A549 (cell line): ENCODE measurements at regions of chr16 and their contacts with region 1.

Region 1: DNA sequence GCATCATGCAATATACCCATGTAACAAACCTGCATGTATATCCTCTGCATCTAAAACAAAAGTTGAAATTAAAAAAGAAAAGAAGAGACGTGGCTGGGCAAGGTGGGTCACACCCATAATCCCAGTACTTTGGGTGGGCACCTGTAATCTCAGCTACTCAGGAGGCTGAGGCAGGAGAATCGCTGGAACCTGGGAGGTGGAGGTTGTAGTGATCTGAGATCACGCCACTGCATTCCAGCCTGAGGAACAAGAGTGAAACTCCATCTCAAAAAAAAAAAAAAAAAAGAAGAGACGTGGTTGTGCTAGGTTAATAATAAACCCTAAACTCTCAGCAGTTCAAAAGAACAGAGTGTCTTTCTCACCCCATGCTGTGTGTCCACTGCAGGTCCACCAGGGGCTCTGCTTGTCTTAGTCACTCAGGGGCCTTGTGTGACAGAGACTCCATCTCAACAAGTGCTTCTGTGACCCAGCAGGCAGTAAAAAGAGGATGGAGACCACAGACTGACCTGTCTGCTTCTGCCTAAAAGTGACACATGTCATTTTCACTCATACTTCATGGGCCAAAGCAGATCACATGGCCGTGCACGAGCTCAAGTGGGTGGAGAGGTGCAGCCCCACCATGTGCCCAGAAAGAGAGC is 22.3 kb upstream of the N4BP1 start:
- DNase-seq: peak in 1 of 2 experiments; percentile 33
- ATAC-seq: peak; percentile 54 to 65; a peak in 5 of 6 replicates
- H3K4me3 ChIP-seq: no peak overlapping the region
- H3K27ac ChIP-seq: peak overlapping the region in 1 of 2 experiments; percentile 60; a peak in 1 of 6 replicates
- H3K4me1 ChIP-seq: peaks cover 10% of the 10 kb centered on the region
- CTCF ChIP-seq: no peak
- EP300 ChIP-seq: no peak
- POLR2A ChIP-seq: no peak
- RAD21 ChIP-seq: no peak

Region 2: DNA sequence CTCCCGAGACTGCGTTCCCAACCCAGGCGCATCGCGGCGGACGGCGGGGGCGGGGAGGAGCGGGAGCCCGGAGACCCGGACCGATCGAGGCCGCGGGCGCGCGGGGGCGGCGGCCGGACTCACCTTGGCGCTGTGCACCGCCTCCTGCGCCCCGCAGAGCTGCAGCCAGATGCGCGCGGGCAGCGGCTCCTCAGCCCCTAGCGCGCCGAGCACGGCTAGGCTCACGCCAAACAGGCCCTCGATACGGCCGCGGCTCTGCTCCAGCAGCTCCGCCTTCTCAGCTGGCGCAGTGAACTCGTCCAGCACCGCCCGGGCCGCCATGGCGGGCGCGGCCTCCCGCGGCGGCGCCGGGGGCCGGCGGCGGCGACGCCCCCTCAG is 22.6 kb before region 1 on chr16:
- CTCF ChIA-PET with region 1: interaction called, 41 read pairs
- POLR2A ChIA-PET with region 1: no interaction called
- DNase-seq: peak; percentile 47 to 48
- ATAC-seq: peak; percentile 79 to 83
- H3K4me3 ChIP-seq: peak overlapping the region; percentile 61
- H3K27ac ChIP-seq: peak overlapping the region; percentile 81 to 96
- H3K4me1 ChIP-seq: peaks cover 39% of the 10 kb centered on the region
- CTCF ChIP-seq: no peak
- EP300 ChIP-seq: no peak
- POLR2A ChIP-seq: no peak
- RAD21 ChIP-seq: no peak

Region 3: GRCh38 chr16:48885471-48885870 is 253.2 kb after region 1 on chr16:
- CTCF ChIA-PET with region 1: no interaction called
- POLR2A ChIA-PET with region 1: no interaction called
- DNase-seq: no peak
- ATAC-seq: no peak
- H3K4me3 ChIP-seq: no peak overlapping the region
- H3K27ac ChIP-seq: no peak overlapping the region
- H3K4me1 ChIP-seq: no peaks in the 10 kb centered on the region
- CTCF ChIP-seq: no peak
- EP300 ChIP-seq: no peak
- POLR2A ChIP-seq: no peak
- RAD21 ChIP-seq: no peak